ENCODE measurements at regions of chr3 and their contacts with region 1.

Region 1: DNA sequence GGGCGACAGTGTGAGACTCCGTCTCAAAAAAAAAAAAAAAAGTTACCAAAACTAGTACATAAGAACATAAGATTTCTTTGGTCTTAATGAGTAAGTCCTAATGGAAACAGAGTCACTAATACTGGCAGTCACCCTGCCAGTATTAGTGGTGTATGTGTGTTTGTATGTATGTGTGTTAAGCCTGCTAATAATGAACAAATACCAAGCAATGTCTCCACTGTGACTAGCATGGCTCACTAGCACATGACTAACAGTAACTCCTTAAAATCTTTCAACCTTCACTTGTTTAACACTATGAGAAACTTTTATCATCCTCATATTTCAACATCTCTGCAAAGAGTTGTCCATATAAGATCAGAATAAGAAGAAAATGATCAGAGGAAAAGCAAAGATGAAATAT is 231.0 kb upstream of the ATP11B start:
- DNase-seq: no peak

Region 2: DNA sequence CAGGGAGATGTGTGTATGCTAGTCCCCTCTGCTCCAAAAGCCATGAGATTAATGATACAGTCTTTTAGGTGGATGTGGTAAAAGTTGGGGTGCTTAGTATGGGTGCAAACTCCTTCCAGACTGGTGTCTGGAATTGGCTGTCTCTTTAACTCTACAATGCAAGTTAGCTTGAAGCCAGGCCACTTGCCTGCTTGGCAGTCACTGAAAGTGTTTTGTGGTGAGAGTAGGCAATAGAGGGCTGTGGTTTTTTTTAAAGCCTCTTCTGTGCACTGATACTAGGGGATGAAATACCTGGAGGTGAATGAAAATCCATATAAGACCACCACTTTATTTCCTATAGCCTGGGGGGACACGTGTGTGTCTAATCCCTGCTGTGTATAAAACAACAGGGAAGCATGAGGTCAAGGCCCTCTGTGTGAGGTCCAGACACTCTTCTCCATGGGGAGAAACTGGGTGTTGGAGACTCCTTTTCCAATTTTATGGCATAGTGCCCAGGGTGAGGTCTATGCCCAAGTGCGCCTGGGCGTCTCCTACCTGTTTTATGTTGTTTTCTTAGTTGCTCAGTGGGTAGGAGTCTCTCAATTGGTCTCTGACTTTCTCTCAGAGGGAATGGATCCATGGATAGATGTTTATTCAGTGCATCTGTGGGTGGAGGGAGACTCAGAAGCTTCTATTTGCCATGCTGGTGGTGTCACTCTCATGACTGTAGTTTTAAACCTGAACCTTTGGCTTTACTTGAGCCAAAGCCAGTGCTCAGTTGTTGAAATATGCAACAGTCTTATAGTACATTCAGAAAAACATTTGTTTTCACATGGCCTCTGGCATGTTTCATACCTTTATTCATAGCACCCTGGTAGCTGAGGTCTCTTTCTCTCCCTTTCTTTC is 96.7 kb before region 1 on chr3:
- CTCF ChIA-PET with region 1: no interaction called
- POLR2A ChIA-PET with region 1: no interaction called
- DNase-seq: no peak

Region 3: DNA sequence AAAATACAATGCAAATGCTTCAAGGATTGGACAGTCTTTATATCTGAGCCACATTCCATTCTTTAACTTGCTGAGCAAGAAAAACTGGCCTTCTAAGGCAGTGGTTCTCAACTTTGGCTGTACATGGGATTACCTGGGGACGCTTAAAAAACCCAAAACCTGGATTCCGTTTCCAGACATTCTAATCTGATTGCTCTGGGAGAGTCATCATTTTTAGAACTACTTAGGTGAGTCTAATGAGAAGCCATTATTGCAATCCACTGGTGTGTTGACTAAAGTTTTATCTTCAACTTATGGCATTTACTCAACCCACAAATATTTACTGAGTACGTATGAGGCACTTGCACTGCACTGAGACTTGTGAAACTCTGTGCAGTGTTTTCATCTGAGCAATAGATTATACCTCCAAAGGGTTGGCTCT is 35.4 kb after region 1 on chr3:
- CTCF ChIA-PET with region 1: interaction called, 13 read pairs
- POLR2A ChIA-PET with region 1: no interaction called
- DNase-seq: no peak